PC-9 (cell line): ENCODE measurements at regions of chr7 and their contacts with region 1.

Region 1: GRCh38 chr7:38195804-38196595 is 18.0 kb downstream of the STARD3NL start:
- DNase-seq: no peak
- H3K4me3 ChIP-seq: no peak overlapping the region
- H3K27ac ChIP-seq: no peak overlapping the region
- H3K4me1 ChIP-seq: no peaks in the 10 kb centered on the region
- H3K27me3 ChIP-seq: no peaks in the 10 kb centered on the region
- CTCF ChIP-seq: no peak

Region 2: GRCh38 chr7:38178004-38178694 is 17.9 kb before region 1 on chr7 and contains the start of gene STARD3NL:
- CTCF ChIA-PET with region 1: no interaction called
- POLR2A ChIA-PET with region 1: interaction called, 20 read pairs
- intact Hi-C with region 1: loop called (anchors 1 kb)
- DNase-seq: peak; percentile 98 to 99
- H3K4me3 ChIP-seq: peak within 1 kb of the TSS; percentile 91
- H3K27ac ChIP-seq: peak within 1 kb of the TSS; percentile 43
- H3K4me1 ChIP-seq: peaks cover 9% of the 10 kb centered on the region
- H3K27me3 ChIP-seq: 0 out of 2 replicates have a peak, but pooled peaks cover 3% of the 10 kb centered on the region
- CTCF ChIP-seq: no peak
- total RNA-seq, gene STARD3NL: 30.2 and 41.4 TPM in 2 replicates